PC-3 (cell line): ENCODE measurements at regions of chr1 and their contacts with region 1.

Region 1: DNA sequence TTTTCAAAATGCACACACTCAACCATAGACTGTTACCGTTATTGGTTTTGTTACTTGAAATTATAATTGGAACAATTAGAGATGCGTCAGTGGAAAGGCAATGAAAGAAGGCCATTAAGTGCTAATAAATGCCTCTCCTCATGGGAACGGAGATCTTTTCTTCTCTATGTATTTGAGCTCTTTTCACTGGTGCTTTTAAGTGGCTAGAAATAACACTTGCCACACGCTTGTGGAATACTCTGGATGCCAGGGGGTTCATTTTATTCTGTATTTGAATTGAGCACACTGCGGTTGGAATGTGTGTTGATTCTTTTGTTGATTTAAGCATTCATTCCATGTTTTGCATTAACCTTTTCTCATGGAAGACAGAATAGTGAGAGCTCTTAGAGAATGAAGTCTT is 68.4 kb downstream of the DNM3 start:
- DNase-seq: no peak
- ATAC-seq: no peak
- H3K4me3 ChIP-seq: no peak overlapping the region
- H3K27ac ChIP-seq: no peak overlapping the region
- H3K4me1 ChIP-seq: peaks cover 7% of the 10 kb centered on the region
- H3K27me3 ChIP-seq: peaks cover 44% of the 10 kb centered on the region
- CTCF ChIP-seq: no peak

Region 2: DNA sequence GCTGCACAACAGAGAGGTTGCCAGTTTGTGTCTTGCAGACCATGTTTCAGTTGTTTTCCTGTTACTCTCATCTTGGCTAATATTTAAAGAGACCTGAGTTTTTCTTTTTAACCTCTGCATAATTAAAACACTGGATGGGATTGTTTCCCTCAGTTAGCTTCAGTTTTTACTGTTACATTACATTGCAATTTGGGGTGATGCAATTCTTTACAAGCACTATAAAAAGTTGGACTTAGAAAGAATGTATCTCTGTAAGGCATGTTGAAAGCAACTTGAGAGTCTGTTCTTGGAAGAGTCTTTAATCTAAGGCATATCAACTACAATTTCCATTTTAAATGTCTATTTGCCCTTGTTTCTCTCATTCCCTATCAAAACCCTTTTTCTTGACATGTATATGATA is 30.7 kb after region 1 on chr1:
- CTCF ChIA-PET with region 1: no interaction called
- POLR2A ChIA-PET with region 1: no interaction called
- intact Hi-C with region 1: loop called (anchors 5 kb)
- DNase-seq: no peak
- ATAC-seq: no peak
- H3K4me3 ChIP-seq: no peak overlapping the region
- H3K27ac ChIP-seq: no peak overlapping the region
- H3K4me1 ChIP-seq: no peaks in the 10 kb centered on the region
- H3K27me3 ChIP-seq: peaks cover 67% of the 10 kb centered on the region
- CTCF ChIP-seq: no peak